ENCODE measurements at regions of chr11 and their contacts with region 1.

Region 1: DNA sequence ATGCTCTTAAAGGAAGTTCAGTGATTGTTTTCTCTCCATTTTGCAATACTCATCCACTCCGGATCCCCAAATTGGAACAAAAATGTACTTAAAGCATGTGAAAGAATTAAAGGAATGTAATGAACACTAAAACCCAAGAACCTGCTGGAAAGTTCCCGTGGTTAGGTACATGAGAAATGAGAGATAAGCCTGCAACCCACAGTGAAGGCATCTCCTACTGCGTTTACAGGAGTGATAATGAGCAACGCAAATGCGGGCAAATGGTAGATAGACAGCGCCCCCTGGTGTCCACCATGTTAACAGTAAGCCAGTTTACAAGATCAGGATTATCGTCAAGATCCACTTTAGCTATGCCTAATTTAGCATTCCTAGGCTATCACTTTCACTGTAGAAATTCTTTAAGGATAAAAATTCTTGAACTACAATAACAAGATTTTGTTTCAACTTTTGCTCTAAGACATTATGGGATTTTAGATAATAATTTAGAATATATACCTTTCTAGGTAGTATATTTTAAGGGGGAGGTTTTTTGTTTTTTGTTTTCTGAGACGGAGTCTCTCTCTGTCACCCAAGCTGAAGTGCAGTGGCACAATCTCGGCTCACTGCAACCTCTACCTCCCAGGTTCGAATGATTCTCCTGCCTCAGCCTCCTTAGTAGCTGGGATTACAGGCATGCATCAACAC is 29.9 kb downstream of the ALG9 start:
- DNase-seq: peak; percentile 94
- H3K4me3 Mint-ChIP-seq: no peak overlapping the region
- H3K27ac Mint-ChIP-seq: no peak overlapping the region
- H3K4me1 Mint-ChIP-seq: peaks cover 9% of the 10 kb centered on the region
- H3K27me3 Mint-ChIP-seq: no peaks in the 10 kb centered on the region

Region 2: DNA sequence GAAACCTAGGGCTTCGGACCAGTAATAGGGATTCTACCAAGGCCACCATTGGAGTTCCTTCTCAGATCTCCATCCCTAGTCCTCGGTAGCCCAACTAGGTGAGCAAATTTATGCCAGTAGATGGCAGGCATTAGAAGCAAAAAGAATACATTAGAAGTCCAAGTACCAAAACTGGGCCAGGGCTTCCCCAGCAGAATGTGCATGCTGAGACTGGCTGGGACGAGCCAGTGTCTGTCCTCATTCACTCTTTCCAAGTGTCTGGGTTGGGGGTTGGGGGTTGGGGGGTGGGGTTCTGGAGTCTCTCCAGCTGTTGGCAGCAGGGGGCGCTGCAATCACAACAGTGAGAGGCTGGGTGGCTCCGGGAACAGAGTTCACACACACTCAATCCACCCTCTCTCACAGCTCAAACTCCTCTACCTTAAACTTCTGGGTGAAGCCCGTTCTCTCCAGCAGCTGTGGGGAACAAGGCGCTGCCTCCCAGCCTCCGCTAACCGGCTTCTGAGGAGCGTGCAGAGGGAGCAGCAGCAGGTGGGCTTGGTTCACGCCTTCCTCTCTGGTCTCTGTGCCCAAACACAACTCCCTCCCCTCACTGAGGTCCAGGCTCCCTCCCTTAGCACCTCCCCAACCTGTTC is 386.8 kb before region 1 on chr11:
- intact Hi-C with region 1: loop called (anchors 5 kb)
- DNase-seq: peak; percentile 83
- H3K4me3 Mint-ChIP-seq: no peak overlapping the region
- H3K27ac Mint-ChIP-seq: peak overlapping the region; percentile 21
- H3K4me1 Mint-ChIP-seq: no peaks in the 10 kb centered on the region
- H3K27me3 Mint-ChIP-seq: peaks cover 15% of the 10 kb centered on the region

Region 3: GRCh38 chr11:111565114-111565720 is 276.3 kb before region 1 on chr11:
- intact Hi-C with region 1: loop called (anchors 1 kb)
- DNase-seq: peak; percentile 89
- H3K4me3 Mint-ChIP-seq: no peak overlapping the region
- H3K27ac Mint-ChIP-seq: no peak overlapping the region
- H3K4me1 Mint-ChIP-seq: no peaks in the 10 kb centered on the region
- H3K27me3 Mint-ChIP-seq: no peaks in the 10 kb centered on the region

Region 4: DNA sequence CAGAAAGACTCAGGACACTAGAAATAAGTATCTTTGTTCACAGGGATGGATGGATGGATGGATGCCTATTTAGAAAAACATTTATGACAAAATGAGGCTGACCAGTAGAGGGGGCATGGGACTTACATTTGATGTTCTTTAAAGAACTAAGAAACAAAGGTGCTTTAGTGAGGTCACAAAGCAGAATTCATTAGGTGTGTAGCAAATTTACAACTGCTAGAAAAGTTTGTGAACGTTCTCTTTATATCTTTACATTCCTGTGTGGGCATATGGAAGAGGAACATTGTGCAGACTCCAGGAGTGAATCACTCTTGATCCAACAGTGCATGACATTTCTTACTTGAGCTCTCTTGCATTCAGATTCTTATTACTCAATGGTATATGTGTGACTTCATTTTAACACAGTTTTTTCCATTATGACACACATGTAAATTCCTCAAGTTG is 255.1 kb before region 1 on chr11:
- intact Hi-C with region 1: loop called (anchors 1 kb)
- DNase-seq: peak; percentile 84
- H3K4me3 Mint-ChIP-seq: no peak overlapping the region
- H3K27ac Mint-ChIP-seq: no peak overlapping the region
- H3K4me1 Mint-ChIP-seq: peaks cover 2% of the 10 kb centered on the region
- H3K27me3 Mint-ChIP-seq: peaks cover 4% of the 10 kb centered on the region

Region 5: DNA sequence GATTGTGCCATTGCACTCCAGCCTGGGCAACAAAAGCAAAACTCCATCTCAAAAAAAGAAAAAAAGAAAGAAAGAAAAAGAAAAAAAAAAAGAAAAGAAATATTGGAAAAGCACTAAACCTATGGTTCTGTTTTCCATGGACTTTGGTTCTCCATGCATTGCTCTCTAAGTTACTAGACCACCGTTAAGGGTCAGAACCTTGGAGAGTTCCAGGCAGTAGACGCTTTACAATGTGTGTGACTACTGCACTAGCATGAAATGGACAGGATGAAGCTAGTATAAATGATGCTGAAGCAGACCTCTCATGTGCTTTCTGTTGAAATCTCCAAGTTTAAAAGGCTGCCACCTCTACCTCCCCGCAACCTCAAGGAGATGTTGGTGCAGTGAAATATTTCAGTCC is 175.7 kb before region 1 on chr11:
- intact Hi-C with region 1: no loop called
- DNase-seq: peak; percentile 60
- H3K4me3 Mint-ChIP-seq: no peak overlapping the region
- H3K27ac Mint-ChIP-seq: no peak overlapping the region
- H3K4me1 Mint-ChIP-seq: no peaks in the 10 kb centered on the region
- H3K27me3 Mint-ChIP-seq: no peaks in the 10 kb centered on the region

Region 6: GRCh38 chr11:111766093-111766833 is 75.2 kb before region 1 on chr11 and contains the start of gene PPP2R1B:
- intact Hi-C with region 1: loop called (anchors 1 kb)
- DNase-seq: peak; percentile 91
- H3K4me3 Mint-ChIP-seq: peak within 1 kb of the TSS; percentile 85
- H3K27ac Mint-ChIP-seq: peak within 1 kb of the TSS; percentile 98
- H3K4me1 Mint-ChIP-seq: peaks cover 31% of the 10 kb centered on the region
- H3K27me3 Mint-ChIP-seq: no peaks in the 10 kb centered on the region
- total RNA-seq, gene PPP2R1B: 63.2 and 63.6 TPM in 2 replicates

Region 7: DNA sequence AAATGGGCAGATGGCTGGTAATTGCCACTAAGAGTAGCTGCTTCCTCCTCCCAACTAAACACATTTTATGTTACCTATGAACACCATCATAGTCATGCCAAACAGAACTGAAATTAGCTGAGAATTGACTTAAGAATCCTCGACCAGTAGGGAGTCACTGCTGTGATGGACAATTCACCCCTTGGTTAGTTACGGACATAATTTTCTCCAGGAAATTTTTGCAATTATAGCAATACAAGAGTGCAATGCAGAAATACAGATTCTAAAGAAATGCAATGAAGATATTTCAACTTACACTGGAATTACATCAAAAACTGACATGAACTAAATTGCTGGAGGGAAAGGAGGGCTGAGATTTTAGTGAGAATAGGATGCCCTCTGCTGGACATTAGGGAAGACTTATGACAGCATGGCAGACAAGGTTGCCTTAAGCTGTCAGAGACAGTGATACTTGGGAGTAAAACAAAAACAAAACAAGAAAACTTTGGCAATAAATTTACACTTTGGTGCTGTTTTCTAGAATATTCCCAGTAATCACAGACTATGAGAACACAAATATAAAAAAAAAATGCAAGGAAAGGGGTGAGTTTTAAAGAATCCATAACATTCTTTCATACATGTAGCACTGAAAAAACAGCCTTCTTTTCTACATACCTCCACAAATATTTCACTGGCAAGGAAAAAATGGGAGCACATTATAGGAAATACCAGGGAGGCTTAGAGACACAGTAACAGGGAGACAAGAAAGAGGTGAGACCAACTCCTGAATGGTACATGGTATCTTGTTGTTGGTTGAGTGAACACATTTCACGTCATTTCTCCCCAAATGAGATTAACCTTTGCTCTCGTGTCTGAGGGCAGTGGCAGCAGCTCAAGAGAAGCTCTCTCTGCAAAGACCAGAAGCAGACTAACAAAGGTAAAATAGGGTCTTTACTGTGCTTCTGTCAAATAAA is 64.1 kb before region 1 on chr11:
- intact Hi-C with region 1: loop called (anchors 2 kb)
- DNase-seq: peak; percentile 77
- H3K4me3 Mint-ChIP-seq: no peak overlapping the region
- H3K27ac Mint-ChIP-seq: no peak overlapping the region
- H3K4me1 Mint-ChIP-seq: no peaks in the 10 kb centered on the region
- H3K27me3 Mint-ChIP-seq: no peaks in the 10 kb centered on the region